GM12878 (cell line): ENCODE measurements at regions of chr9 and their contacts with region 1.

Region 1: DNA sequence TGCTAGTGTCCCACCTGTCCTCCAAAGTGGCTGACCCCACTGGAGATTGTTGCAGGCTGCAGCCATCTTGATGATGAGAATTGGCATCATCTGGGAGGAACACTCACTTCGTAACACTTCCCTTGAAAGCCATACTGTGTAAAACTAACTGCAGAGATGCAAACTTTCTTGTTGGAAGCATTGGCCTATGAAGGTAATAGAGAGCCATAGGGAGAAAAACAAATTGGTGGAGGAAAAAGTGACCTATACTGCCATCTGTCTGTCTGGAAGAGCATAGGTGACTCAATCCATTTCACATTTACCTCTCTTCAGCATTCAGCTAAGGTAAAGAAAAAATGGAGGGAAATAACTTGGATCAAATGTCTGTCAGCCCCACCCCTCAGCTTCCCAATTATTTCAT is 473.4 kb downstream of the NTRK2 start:
- DNase-seq: peak; percentile 16
- ATAC-seq: peak; percentile 84
- H3K4me3 ChIP-seq: no peak overlapping the region
- H3K27ac ChIP-seq: no peak overlapping the region
- H3K4me1 ChIP-seq: no peaks in the 10 kb centered on the region
- H3K27me3 ChIP-seq: peaks cover 0 to 3% of the 10 kb centered on the region in 2 experiments; a peak in 1 of 4 replicates
- CTCF ChIP-seq: peak; percentile 63 to 81 (median 76)
- EP300 ChIP-seq: no peak
- POLR2A ChIP-seq: no peak
- RAD21 ChIP-seq: peak; percentile 87

Region 2: GRCh38 chr9:84652577-84653061 is 490.3 kb before region 1 on chr9:
- CTCF ChIA-PET with region 1: interaction called, 4 read pairs
- POLR2A ChIA-PET with region 1: no interaction called
- RAD21 ChIA-PET with region 1: interaction called, 3 read pairs
- SMC1A ChIA-PET with region 1: interaction called, 4 read pairs
- in situ Hi-C with region 1: no loop called
- intact Hi-C with region 1: loop called (anchors 5 kb)
- DNase-seq: no peak
- ATAC-seq: no peak
- H3K4me3 ChIP-seq: no peak overlapping the region
- H3K27ac ChIP-seq: no peak overlapping the region
- H3K4me1 ChIP-seq: no peaks in the 10 kb centered on the region
- H3K27me3 ChIP-seq: 0 out of 4 replicates have a peak, but pooled peaks cover 0 to 3% of the 10 kb centered on the region in 2 experiments
- CTCF ChIP-seq: peak in 1 of 3 experiments; percentile 26; a peak in 1 of 6 replicates
- EP300 ChIP-seq: no peak
- POLR2A ChIP-seq: no peak
- RAD21 ChIP-seq: 0 out of 2 replicates have a peak, but pooled peaks have one; percentile 24

Region 3: GRCh38 chr9:84953797-84954705 is 188.9 kb before region 1 on chr9:
- CTCF ChIA-PET with region 1: interaction called, 4 read pairs
- POLR2A ChIA-PET with region 1: no interaction called
- RAD21 ChIA-PET with region 1: interaction called, 3 read pairs
- SMC1A ChIA-PET with region 1: interaction called, 3 read pairs
- in situ Hi-C with region 1: no loop called
- intact Hi-C with region 1: loop called (anchors 10 kb)
- DNase-seq: no peak
- ATAC-seq: peak; percentile 99
- H3K4me3 ChIP-seq: no peak overlapping the region
- H3K27ac ChIP-seq: no peak overlapping the region
- H3K4me1 ChIP-seq: no peaks in the 10 kb centered on the region
- H3K27me3 ChIP-seq: no peaks in the 10 kb centered on the region
- CTCF ChIP-seq: peak; percentile 93 to 95 (median 94)
- EP300 ChIP-seq: no peak
- POLR2A ChIP-seq: no peak
- RAD21 ChIP-seq: peak; percentile 83

Region 4: GRCh38 chr9:85009251-85009650 is 133.7 kb before region 1 on chr9:
- CTCF ChIA-PET with region 1: interaction called, 6 read pairs
- POLR2A ChIA-PET with region 1: no interaction called
- RAD21 ChIA-PET with region 1: interaction called, 3 read pairs
- SMC1A ChIA-PET with region 1: interaction called, 5 read pairs
- in situ Hi-C with region 1: no loop called
- intact Hi-C with region 1: loop called (anchors 5 kb)
- DNase-seq: peak; percentile 4
- ATAC-seq: peak; percentile 85
- H3K4me3 ChIP-seq: no peak overlapping the region
- H3K27ac ChIP-seq: no peak overlapping the region
- H3K4me1 ChIP-seq: peaks cover 9% of the 10 kb centered on the region
- H3K27me3 ChIP-seq: 0 out of 4 replicates have a peak, but pooled peaks cover 0 to 2% of the 10 kb centered on the region in 2 experiments
- CTCF ChIP-seq: peak in 1 of 3 experiments; percentile 19; a peak in 1 of 6 replicates
- EP300 ChIP-seq: no peak; a peak in 1 of 4 replicates
- POLR2A ChIP-seq: no peak
- RAD21 ChIP-seq: no peak

Region 5: DNA sequence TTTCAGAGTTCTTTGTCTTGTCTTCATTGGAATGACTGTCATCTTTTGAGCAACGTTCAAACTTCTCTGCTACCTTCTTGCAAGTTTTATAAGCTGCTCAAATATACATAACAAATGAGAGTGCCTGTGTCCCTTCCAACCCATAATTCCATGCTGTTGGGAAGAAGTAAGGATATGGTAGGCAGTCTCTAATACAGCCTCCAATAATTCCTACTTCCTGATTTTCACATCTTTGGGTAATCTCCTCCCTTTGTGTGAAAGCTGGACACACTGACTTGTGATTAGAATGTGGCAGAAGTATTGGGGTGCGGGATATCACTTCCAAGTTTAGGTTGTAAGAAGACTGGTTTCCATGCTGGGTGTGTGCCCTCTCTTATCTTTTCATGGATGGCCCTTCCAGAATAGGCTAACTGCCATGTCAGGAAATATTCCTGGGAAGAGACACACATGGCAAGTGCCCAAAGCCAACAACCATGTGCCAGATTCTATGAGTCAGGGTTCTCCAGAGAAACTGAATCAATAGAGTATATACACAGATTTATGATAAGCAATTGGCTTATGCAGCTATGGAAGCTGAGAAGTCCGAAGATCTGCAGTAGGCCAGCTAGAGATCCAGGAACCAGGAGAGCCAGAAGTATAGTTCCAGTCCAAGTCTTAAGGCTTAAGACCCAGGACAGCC is 57.9 kb after region 1 on chr9:
- CTCF ChIA-PET with region 1: no interaction called
- POLR2A ChIA-PET with region 1: no interaction called
- RAD21 ChIA-PET with region 1: no interaction called
- SMC1A ChIA-PET with region 1: no interaction called
- in situ Hi-C with region 1: no loop called
- intact Hi-C with region 1: no loop called
- DNase-seq: no peak
- ATAC-seq: no peak
- H3K4me3 ChIP-seq: no peak overlapping the region
- H3K27ac ChIP-seq: no peak overlapping the region
- H3K4me1 ChIP-seq: no peaks in the 10 kb centered on the region
- H3K27me3 ChIP-seq: no peaks in the 10 kb centered on the region
- CTCF ChIP-seq: no peak
- EP300 ChIP-seq: no peak
- POLR2A ChIP-seq: no peak
- RAD21 ChIP-seq: no peak

Region 6: DNA sequence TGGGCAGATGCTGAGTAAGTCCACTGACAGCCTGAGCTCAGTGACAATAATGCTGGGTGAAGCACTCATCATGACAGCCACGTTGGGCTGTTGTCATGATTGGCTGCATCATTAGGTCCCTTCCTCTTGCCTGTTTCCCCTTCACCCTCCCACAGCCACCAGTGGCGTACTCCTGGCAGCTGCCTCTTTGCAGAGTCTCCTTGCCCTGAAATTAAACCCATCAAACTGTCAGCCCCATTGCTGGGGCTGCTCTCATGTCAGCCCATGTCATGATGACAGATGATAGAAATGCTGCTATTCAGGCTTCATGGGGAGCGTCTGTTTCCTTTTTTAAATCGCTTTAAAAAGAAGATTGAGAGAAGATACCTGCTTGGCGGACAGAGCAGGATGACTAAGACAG is 271.4 kb after region 1 on chr9:
- CTCF ChIA-PET with region 1: no interaction called
- POLR2A ChIA-PET with region 1: no interaction called
- RAD21 ChIA-PET with region 1: no interaction called
- SMC1A ChIA-PET with region 1: no interaction called
- in situ Hi-C with region 1: no loop called
- intact Hi-C with region 1: no loop called
- DNase-seq: no peak
- ATAC-seq: no peak
- H3K4me3 ChIP-seq: no peak overlapping the region
- H3K27ac ChIP-seq: no peak overlapping the region
- H3K4me1 ChIP-seq: no peaks in the 10 kb centered on the region
- H3K27me3 ChIP-seq: no peaks in the 10 kb centered on the region; a peak in 1 of 4 replicates
- CTCF ChIP-seq: no peak
- EP300 ChIP-seq: no peak
- POLR2A ChIP-seq: no peak
- RAD21 ChIP-seq: no peak

Region 7: GRCh38 chr9:85483208-85483607 is 340.2 kb after region 1 on chr9:
- CTCF ChIA-PET with region 1: no interaction called
- POLR2A ChIA-PET with region 1: no interaction called
- RAD21 ChIA-PET with region 1: no interaction called
- SMC1A ChIA-PET with region 1: no interaction called
- in situ Hi-C with region 1: no loop called
- intact Hi-C with region 1: no loop called
- DNase-seq: no peak
- ATAC-seq: no peak
- H3K4me3 ChIP-seq: no peak overlapping the region
- H3K27ac ChIP-seq: no peak overlapping the region
- H3K4me1 ChIP-seq: no peaks in the 10 kb centered on the region
- H3K27me3 ChIP-seq: peaks cover 0 to 4% of the 10 kb centered on the region in 2 experiments; a peak in 1 of 4 replicates
- CTCF ChIP-seq: no peak
- EP300 ChIP-seq: no peak
- POLR2A ChIP-seq: no peak
- RAD21 ChIP-seq: no peak